ENCODE measurements at regions of chr17 and their contacts with region 1.

Region 1: DNA sequence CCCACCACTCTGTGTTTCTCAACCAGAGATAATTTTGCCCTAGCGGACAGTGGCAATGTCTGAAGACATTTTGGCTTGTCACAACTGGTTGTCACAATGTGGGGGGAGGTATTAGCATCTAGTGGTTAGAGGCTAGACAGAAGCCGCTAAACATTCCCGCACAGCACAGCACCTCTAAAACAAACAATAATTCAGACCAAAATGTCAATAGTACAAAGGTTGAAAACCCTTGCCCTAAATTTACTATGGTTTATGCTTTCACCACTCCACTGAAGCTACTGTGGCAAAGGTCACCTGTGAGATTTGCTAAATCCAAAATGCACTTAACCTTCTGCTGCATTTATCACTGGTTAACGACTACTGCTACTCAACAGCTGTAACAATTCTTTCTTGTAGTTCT is 14.1 kb downstream of the NUP88 start:
- DNase-seq: no peak
- ATAC-seq: no peak
- H3K4me3 Mint-ChIP-seq: no peak overlapping the region
- H3K27ac Mint-ChIP-seq: no peak overlapping the region
- H3K4me1 Mint-ChIP-seq: peaks cover 11% of the 10 kb centered on the region
- H3K27me3 Mint-ChIP-seq: no peaks in the 10 kb centered on the region
- CTCF ChIP-seq: no peak

Region 2: DNA sequence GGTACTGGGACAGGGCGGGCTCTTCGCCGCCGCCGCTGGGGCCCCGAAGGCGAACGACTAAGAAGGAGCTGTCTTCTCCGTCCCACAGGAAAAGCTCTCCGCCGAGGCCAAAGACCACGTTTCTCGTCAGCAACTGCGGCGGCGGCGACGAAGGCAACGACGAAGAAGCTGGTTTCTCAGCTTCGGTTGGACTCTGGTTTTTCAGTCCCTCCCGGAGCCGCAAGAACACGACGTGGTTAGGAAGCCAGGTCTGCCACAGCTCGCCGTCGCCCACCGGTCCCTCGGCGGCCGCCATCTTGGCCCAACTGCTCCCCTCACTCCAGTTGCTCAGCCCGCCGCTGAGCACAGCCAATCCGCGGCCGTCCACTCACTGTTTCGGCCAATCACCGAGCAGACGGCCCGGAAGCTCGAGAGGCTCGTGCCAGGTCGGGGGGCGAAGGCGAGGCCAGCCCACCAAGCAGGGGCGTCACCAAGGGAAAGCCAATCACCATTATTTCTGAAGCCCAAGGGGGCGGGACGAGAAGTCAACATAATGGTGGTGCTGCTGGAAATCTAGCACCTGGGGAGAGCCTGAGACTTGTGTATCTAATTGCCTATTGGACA is 14.1 kb after region 1 on chr17 and contains the start of gene NUP88:
- CTCF ChIA-PET with region 1: interaction called, 3 read pairs
- POLR2A ChIA-PET with region 1: interaction called, 40 read pairs
- intact Hi-C with region 1: no loop called
- DNase-seq: peak; percentile 98
- ATAC-seq: peak; percentile 94
- H3K4me3 Mint-ChIP-seq: peak within 1 kb of the TSS; percentile 100
- H3K27ac Mint-ChIP-seq: peak within 1 kb of the TSS; percentile 100
- H3K4me1 Mint-ChIP-seq: peaks cover 40% of the 10 kb centered on the region
- H3K27me3 Mint-ChIP-seq: no peaks in the 10 kb centered on the region
- CTCF ChIP-seq: no peak
- total RNA-seq, gene NUP88: 140 to 141 TPM